ENCODE measurements at regions of chr1 and their contacts with region 1.

Region 1: GRCh38 chr1:78617615-78618026 is 2.6 kb upstream of the IFI44L start:
- DNase-seq: peak in 34 of 35 experiments; percentile 6 to 89 (median 33)
- ATAC-seq: peak; percentile 64 to 74 (median 68)
- H3K4me3 ChIP-seq: no peak overlapping the region
- H3K4me3 Mint-ChIP-seq: peak overlapping the region in 1 of 3 donors; percentile 10
- H3K27ac ChIP-seq: no peak overlapping the region
- H3K27ac Mint-ChIP-seq: peak overlapping the region; percentile 45 to 82
- H3K4me1 ChIP-seq: peaks cover 16 to 21% of the 10 kb centered on the region in 2 experiments
- H3K4me1 Mint-ChIP-seq: peaks cover 39 to 48% (median 40%) of the 10 kb centered on the region in 3 donors
- H3K27me3 ChIP-seq: no peaks in the 10 kb centered on the region
- H3K27me3 Mint-ChIP-seq: no peaks in the 10 kb centered on the region

Region 2: DNA sequence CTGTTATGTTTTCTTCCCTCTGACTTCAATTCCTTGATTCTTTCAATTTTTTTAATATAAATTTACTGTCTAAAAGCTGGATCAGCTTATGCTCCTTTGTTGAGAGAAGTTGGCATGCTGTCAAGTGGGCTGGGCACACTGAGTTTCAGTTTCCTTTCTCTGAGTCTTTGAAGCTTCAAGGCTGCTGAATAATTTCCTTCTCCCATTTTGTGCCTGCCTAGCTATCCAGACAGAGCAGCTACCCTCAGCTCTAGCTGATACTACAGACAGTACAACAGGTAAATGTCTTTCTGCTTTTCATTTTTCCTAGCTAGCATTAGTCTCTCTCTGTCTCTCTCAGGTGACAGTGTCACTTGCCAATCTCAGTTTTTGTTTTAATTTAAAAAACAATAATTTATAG is 32.0 kb after region 1 on chr1 and contains the start of gene IFI44:
- CTCF ChIA-PET with region 1: interaction called, 6 to 16 read pairs
- POLR2A ChIA-PET with region 1: interaction called, 3 to 6 read pairs
- DNase-seq: peak in 34 of 35 experiments; percentile 55 to 91 (median 72)
- ATAC-seq: peak; percentile 70 to 89 (median 76)
- H3K4me3 ChIP-seq: peak within 1 kb of the TSS; percentile 50 to 51
- H3K4me3 Mint-ChIP-seq: peak within 1 kb of the TSS; percentile 89 to 93 (median 92)
- H3K27ac ChIP-seq: peak within 1 kb of the TSS; percentile 66
- H3K27ac Mint-ChIP-seq: peak within 1 kb of the TSS; percentile 94 to 96
- H3K4me1 ChIP-seq: peaks cover 20 to 37% of the 10 kb centered on the region in 2 experiments
- H3K4me1 Mint-ChIP-seq: peaks cover 67 to 89% (median 77%) of the 10 kb centered on the region in 3 donors
- H3K27me3 ChIP-seq: no peaks in the 10 kb centered on the region
- H3K27me3 Mint-ChIP-seq: no peaks in the 10 kb centered on the region
- total RNA-seq, gene IFI44: 27.0 to 54.2 (median 38.1) TPM

Region 3: DNA sequence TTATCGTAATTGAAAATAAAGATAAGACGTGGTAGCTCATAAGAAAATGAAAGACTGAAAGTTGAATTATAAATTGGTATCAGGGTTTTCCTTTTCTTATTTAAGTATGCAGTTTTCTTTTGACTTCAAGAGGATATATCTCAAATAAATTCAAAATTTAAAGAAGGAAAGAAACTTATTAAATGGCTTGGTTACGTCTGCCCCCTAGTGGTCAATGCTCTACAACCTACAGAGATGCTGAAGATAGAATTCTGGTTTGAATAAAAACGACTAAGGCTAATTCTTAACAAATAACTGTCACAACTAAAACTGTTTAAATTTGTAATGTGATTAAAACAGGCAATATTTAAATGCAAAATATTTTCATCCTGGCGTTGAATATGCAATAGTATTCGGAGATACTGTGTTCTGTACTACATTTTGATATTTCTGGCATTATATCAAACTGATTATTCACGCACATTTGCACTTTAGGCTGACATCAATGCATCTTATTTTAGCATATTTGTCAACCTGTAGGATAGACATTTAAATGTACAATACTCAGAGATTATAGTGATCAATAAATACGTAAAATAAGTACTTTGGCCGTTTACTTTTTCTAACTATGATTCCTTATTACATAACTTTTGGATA is 58.8 kb after region 1 on chr1:
- CTCF ChIA-PET with region 1: interaction called, 18 to 25 read pairs
- POLR2A ChIA-PET with region 1: no interaction called
- DNase-seq: peak in 29 of 35 experiments; percentile 5 to 87 (median 39)
- ATAC-seq: peak in 2 of 4 experiments; percentile 50 to 64
- H3K4me3 ChIP-seq: no peak overlapping the region
- H3K4me3 Mint-ChIP-seq: no peak overlapping the region
- H3K27ac ChIP-seq: no peak overlapping the region
- H3K27ac Mint-ChIP-seq: no peak overlapping the region
- H3K4me1 ChIP-seq: no peaks in the 10 kb centered on the region
- H3K4me1 Mint-ChIP-seq: peaks cover 8 to 13% (median 11%) of the 10 kb centered on the region in 3 donors
- H3K27me3 ChIP-seq: no peaks in the 10 kb centered on the region
- H3K27me3 Mint-ChIP-seq: peaks cover 3 to 4% of the 10 kb centered on the region in 2 donors

Region 4: DNA sequence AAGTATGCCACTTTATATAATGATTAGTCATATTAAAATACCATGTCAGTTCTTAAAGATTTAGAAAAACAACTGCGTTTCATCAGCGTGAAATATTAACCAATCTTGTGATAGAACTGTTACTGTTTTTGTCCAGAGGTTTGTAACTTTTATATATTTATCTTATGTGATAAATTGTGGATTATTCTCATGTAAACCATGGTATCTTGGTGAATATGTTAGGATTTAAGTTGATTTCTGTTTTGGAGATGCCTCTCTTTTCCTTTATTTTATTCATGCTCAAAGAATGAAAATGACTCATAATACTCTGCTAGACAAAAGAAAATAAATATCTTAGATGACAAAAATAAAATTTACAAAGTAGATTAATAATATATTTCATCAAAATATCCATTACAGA is 300.5 kb after region 1 on chr1:
- CTCF ChIA-PET with region 1: no interaction called
- POLR2A ChIA-PET with region 1: no interaction called
- DNase-seq: no peak
- ATAC-seq: no peak
- H3K4me3 ChIP-seq: no peak overlapping the region
- H3K4me3 Mint-ChIP-seq: no peak overlapping the region
- H3K27ac ChIP-seq: no peak overlapping the region
- H3K27ac Mint-ChIP-seq: no peak overlapping the region
- H3K4me1 ChIP-seq: no peaks in the 10 kb centered on the region
- H3K4me1 Mint-ChIP-seq: no peaks in the 10 kb centered on the region
- H3K27me3 ChIP-seq: no peaks in the 10 kb centered on the region
- H3K27me3 Mint-ChIP-seq: no peaks in the 10 kb centered on the region